Caco-2 (cell line): ENCODE measurements at regions of chr10 and their contacts with region 1.

Region 1: DNA sequence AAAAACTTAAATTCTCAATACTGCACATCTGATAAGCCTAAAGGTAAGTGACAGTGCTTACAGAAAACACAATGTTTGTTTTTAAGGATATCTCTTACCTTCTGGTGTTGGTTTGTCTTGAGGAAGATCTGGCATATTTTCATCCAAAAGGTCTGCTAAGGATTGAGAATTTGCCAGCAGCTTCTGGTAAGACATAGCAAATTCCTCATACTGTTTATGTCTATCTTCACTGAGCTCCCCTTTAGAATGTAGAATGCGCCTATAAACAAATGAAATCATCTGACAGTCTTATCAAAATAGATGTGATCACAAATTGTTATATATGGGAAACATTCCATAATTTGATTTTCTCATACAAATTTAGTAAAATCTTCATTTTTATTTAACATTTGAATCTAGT is 28.7 kb downstream of the UPF2 start:
- DNase-seq: no peak
- H3K4me3 ChIP-seq: no peak overlapping the region
- H3K4me3 Mint-ChIP-seq: no peak overlapping the region
- H3K27ac Mint-ChIP-seq: no peak overlapping the region
- H3K4me1 ChIP-seq: no peaks in the 10 kb centered on the region
- H3K4me1 Mint-ChIP-seq: no peaks in the 10 kb centered on the region
- H3K27me3 ChIP-seq: no peaks in the 10 kb centered on the region
- H3K27me3 Mint-ChIP-seq: no peaks in the 10 kb centered on the region
- CTCF ChIP-seq: no peak

Region 2: GRCh38 chr10:11986593-11987216 is 27.2 kb before region 1 on chr10:
- CTCF ChIA-PET with region 1: no interaction called
- POLR2A ChIA-PET with region 1: no interaction called
- intact Hi-C with region 1: no loop called
- DNase-seq: peak; percentile 82 to 91
- H3K4me3 ChIP-seq: no peak overlapping the region
- H3K4me3 Mint-ChIP-seq: peak overlapping the region; percentile 20
- H3K27ac Mint-ChIP-seq: peak overlapping the region; percentile 20
- H3K4me1 ChIP-seq: peaks cover 11% of the 10 kb centered on the region
- H3K4me1 Mint-ChIP-seq: peaks cover 12% of the 10 kb centered on the region
- H3K27me3 ChIP-seq: no peaks in the 10 kb centered on the region
- H3K27me3 Mint-ChIP-seq: no peaks in the 10 kb centered on the region
- CTCF ChIP-seq: peak; percentile 96

Region 3: GRCh38 chr10:12036073-12036655 is 22.2 kb after region 1 on chr10:
- CTCF ChIA-PET with region 1: no interaction called
- POLR2A ChIA-PET with region 1: no interaction called
- intact Hi-C with region 1: no loop called
- DNase-seq: no peak
- H3K4me3 ChIP-seq: no peak overlapping the region
- H3K4me3 Mint-ChIP-seq: no peak overlapping the region
- H3K27ac Mint-ChIP-seq: no peak overlapping the region
- H3K4me1 ChIP-seq: peaks cover 6% of the 10 kb centered on the region
- H3K4me1 Mint-ChIP-seq: peaks cover 7% of the 10 kb centered on the region
- H3K27me3 ChIP-seq: no peaks in the 10 kb centered on the region
- H3K27me3 Mint-ChIP-seq: no peaks in the 10 kb centered on the region
- CTCF ChIP-seq: no peak

Region 4: GRCh38 chr10:12121673-12122072 is 107.7 kb after region 1 on chr10:
- CTCF ChIA-PET with region 1: no interaction called
- POLR2A ChIA-PET with region 1: no interaction called
- intact Hi-C with region 1: no loop called
- DNase-seq: no peak
- H3K4me3 ChIP-seq: no peak overlapping the region
- H3K4me3 Mint-ChIP-seq: no peak overlapping the region
- H3K27ac Mint-ChIP-seq: no peak overlapping the region
- H3K4me1 ChIP-seq: peaks cover 8% of the 10 kb centered on the region
- H3K4me1 Mint-ChIP-seq: peaks cover 7% of the 10 kb centered on the region
- H3K27me3 ChIP-seq: no peaks in the 10 kb centered on the region
- H3K27me3 Mint-ChIP-seq: no peaks in the 10 kb centered on the region
- CTCF ChIP-seq: no peak

Region 5: DNA sequence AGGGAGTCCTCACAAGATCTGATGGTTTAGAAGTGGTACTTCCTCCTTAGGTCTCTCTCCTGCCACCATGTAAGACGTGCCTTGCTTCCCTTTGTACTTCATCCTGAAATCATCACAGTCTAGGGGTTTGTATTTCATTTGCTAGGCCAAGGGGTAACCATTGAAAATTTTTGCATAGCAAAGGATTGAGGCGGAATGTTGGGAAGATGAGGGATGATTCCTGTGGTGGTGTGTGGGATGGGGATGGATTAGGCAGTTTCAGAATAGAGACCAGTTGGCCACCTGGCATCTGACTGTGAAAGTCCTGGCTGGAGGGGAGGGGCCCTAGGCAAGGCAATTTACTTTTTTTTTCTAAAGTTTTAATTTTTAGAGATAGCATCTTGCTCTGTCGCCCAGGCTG is 558.4 kb after region 1 on chr10:
- CTCF ChIA-PET with region 1: no interaction called
- POLR2A ChIA-PET with region 1: interaction called, 10 read pairs
- intact Hi-C with region 1: no loop called
- DNase-seq: no peak
- H3K4me3 ChIP-seq: no peak overlapping the region
- H3K4me3 Mint-ChIP-seq: no peak overlapping the region
- H3K27ac Mint-ChIP-seq: no peak overlapping the region
- H3K4me1 ChIP-seq: no peaks in the 10 kb centered on the region
- H3K4me1 Mint-ChIP-seq: no peaks in the 10 kb centered on the region
- H3K27me3 ChIP-seq: no peaks in the 10 kb centered on the region
- H3K27me3 Mint-ChIP-seq: no peaks in the 10 kb centered on the region
- CTCF ChIP-seq: no peak